ENCODE measurements at regions of chr6 and their contacts with region 1.

Region 1: DNA sequence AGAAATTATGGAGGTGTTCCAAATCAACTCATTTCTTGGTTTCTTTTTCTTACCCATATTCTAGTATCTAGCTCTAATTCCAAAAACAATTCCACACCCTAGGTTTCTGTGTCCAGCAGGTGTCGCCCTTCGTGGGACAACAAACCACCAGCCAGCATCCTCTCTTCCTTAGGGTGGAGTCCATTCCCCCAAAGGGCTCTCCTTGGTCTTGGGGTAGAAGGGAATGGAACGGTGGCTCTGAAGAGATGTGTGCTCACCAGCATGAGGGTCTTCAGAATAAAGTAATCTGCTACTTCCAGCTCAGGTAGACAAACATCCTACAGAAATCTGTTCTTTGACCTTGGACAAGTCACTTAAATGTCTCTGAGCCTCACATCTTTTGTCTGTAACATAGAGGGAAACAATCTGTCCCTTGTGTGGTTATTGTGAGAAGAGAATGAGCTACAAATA is 7.2 kb downstream of the HLA-DMB start:
- DNase-seq: peak; percentile 84
- ATAC-seq: peak; percentile 73

Region 2: GRCh38 chr6:32952817-32953739 is 19.4 kb after region 1 on chr6 and contains the start of gene HLA-DMA:
- intact Hi-C with region 1: loop called (anchors 2 kb)
- DNase-seq: peak; percentile 87
- ATAC-seq: peak; percentile 99
- total RNA-seq, gene HLA-DMA: 19.7 TPM

Region 3: DNA sequence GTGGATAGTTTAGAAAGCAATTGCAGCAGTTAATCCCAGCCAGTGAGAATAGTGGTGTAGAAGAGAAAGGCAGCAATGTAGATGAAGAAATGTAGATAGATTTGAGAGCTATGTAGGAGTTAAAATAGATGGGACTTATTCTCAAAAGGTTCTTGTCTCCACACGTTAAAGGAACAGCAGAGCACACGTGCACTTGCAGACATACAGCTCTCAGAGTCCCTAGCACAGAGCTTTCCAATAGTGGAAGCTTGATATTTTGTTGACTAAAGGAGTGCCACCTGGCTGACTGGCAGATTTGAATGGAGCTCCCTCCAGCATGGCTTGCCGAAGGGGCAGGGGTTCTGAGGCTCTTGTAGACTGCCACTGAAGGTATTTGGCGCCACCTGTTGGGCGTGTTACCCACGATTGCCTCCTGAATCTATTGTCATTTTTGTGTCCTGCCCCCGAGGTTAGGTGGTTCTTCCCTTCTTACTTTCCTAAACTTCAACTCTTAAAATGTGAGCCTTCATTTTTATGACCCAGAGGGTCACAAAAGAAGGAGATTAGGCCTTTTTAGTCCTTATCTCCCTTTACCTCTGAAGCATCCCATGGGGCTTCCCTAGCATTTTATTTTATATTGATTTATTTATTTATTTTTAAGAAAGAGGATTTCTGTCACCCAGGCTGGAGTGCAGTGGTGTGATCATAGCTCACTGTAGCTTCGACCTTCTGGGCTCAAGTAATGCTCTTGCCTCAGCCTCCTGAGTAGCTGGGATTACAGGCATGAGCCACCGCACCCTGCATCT is 51.1 kb after region 1 on chr6:
- intact Hi-C with region 1: loop called (anchors 1 kb)
- DNase-seq: peak; percentile 92
- ATAC-seq: peak; percentile 80

Region 4: DNA sequence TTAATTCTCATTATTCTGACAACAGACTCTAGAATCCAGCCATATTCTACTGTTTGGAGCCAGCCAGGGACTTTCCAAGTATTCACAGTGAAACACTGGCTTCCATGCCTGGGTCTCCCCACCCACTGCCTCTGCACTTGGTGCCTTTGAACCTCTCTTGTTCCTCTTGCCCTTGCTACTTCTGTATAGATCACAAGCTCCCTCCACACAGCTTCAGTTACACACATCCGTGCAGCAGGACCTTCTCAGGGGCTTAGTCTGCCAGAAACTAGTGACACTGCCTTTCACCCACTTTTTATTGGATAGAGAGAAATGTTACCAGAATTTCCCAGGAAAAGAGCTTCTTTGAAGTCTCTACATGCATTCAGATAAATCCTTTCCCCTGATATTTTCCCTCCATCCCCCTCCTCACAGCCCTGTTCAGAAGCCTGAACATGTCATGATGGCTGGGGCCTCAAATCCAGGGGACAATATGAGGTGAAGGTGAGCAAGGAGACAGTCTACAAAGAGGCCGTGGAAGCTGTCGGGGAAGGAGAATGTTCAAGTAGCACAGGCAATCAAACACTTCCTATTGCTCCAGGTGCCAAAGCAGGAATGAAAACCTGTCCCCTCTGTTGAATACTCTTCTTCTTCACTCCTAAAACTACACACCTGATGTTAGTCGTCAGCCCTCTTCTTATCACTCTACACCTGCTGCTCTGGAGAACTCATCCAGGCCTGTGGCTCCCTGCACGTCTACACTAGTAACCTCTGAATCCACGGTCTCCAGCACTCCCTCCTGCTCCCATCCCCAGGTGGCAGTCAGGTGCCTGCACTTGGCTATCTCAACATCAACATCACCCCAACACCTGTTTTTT is 95.9 kb after region 1 on chr6:
- intact Hi-C with region 1: no loop called
- DNase-seq: no peak
- ATAC-seq: peak; percentile 89